Ovary (tissue), 10 donors: ENCODE measurements at regions of chr9 and their contacts with region 1.

Region 1: DNA sequence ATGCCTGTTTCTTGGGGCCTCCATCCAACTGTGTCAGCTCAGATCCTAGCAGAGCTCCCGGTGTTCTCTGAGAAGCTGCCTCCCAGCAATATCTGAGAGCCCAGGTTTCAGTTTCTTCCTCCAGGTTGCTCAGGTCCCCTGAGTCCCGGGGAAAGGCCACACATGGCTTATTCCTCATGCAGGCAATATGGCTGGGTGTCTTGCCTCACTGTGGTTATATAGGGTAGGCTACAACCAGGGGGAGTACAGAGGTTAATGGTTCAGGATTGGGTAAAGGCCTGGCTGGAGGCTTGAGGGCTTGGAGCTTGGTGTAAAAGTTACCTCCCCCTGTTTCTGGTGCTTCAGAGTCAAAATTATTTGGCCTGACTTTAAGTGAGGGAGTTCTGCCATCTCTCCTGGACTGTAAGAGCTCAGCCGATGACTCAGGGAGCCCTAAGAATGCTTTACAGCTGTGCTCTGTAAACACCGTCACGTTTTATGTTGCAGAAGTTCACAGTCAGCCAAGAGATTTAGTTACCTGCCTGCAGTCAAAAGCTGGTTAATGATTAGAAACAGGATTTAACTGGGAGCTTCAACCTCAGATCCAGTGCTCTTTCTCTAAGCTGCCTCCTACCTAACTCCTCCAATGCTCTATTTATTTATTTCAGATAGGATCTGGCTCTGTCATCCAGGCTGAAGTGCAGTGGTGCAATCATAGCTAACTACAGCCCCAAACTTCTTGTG is 24.3 kb upstream of the UBAP2 start:
- DNase-seq: peak in 2 of 5 donors; percentile 28 to 33
- H3K4me3 ChIP-seq: no peak overlapping the region
- H3K27ac ChIP-seq: peak overlapping the region; percentile 14 to 36
- H3K4me1 ChIP-seq: peaks cover 5% of the 10 kb centered on the region
- H3K27me3 ChIP-seq: no peaks in the 10 kb centered on the region
- CTCF ChIP-seq: no peak
- EP300 ChIP-seq: no peak
- POLR2A ChIP-seq: no peak

Region 2: DNA sequence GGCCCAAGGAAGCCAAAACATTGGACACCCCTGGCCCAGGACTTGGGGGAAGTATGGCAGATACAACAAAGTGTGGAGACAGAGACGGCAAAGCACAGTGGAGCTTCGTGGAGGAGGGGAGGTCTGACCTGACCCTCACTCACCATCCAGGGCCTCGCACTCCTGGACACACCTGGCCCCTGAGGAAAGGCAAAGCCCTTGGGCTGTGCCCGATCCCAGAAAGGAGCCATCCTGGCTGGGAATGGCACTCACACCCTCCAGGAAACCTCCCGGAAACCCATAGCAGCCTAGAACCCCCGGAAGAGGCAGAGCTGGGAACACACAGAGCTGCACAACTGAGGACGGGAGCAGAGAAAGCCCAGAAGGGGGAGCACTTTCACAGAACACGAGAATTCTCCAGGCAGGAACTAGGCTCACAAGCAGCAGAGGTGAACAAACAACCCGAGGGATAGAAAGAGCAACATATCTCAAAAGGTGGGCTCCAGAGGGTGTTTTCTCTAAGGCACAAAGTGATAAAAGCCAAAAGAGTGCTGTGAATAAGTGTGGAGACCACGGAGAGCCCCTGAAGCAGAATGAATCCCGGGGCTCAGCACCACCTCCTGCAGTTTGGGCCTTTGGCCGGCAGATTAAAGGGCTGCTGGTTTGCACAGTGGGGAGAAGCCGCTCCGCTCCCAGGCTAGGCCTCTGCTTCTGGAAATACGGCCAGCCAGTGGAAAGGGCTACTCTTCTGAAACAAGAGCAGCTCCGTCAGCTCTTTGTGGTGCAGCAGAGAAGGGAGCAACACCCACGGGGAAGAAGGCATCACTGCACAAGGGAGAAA is 147.8 kb before region 1 on chr9:
- intact Hi-C with region 1: loop called in 1 of 4 experiments (anchors 5 kb)
- DNase-seq: peak; percentile 51 to 62 (median 54)
- H3K4me3 ChIP-seq: no peak overlapping the region
- H3K27ac ChIP-seq: no peak overlapping the region
- H3K4me1 ChIP-seq: peaks cover 1% of the 10 kb centered on the region
- H3K27me3 ChIP-seq: no peaks in the 10 kb centered on the region
- CTCF ChIP-seq: peak; percentile 24 to 29 (median 29)
- EP300 ChIP-seq: no peak
- POLR2A ChIP-seq: no peak